Endothelial cell of umbilical vein (primary cell): ENCODE measurements at regions of chr15 and their contacts with region 1.

Region 1: GRCh38 chr15:92797168-92797951 is 102.8 kb upstream of the CHD2 start:
- DNase-seq: peak; percentile 77
- H3K4me3 ChIP-seq: no peak overlapping the region
- H3K27ac ChIP-seq: no peak overlapping the region
- H3K4me1 ChIP-seq: no peaks in the 10 kb centered on the region
- H3K27me3 ChIP-seq: no peaks in the 10 kb centered on the region
- CTCF ChIP-seq: peak; percentile 49 to 55
- POLR2A ChIP-seq: no peak

Region 2: DNA sequence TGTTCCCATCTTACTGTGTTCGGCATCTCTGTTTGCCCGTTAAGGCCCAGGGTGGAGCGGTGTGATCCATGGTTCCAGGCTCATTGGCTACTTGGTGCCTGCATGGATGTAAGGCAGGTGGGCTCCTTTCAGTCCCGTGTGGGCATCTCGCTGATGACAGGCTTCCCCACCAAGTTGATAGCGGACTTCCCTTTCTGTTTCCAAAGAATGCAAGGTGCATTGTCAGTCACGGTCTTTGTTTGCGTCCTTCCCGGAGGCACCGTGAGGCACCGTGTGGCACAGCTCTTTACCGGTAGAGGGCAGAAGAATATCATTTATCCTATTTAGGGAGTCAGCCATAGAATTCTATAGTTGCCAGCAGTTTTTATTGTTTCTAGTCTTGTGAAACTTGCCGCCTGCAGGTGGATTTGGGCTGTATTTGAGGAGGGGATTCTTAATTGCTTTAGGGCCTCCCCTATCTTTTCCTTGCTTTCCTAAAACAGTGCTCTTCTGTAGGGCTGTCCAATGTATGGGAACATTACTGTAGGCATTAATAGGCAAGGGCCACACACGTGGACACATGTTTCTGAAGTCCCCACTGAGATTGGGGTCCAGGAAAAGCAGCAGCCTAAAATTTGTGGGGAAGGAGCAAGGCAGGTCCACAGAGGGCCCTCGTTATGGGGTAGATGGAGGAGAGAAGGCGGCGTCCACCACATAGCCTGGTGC is 699.7 kb before region 1 on chr15:
- CTCF ChIA-PET with region 1: interaction called, 9 read pairs
- POLR2A ChIA-PET with region 1: no interaction called
- dilution Hi-C with region 1: no loop called
- intact Hi-C with region 1: loop called (anchors 1 kb)
- DNase-seq: peak; percentile 57
- H3K4me3 ChIP-seq: no peak overlapping the region
- H3K27ac ChIP-seq: no peak overlapping the region
- H3K4me1 ChIP-seq: no peaks in the 10 kb centered on the region
- H3K27me3 ChIP-seq: no peaks in the 10 kb centered on the region
- CTCF ChIP-seq: peak; percentile 68
- POLR2A ChIP-seq: no peak

Region 3: DNA sequence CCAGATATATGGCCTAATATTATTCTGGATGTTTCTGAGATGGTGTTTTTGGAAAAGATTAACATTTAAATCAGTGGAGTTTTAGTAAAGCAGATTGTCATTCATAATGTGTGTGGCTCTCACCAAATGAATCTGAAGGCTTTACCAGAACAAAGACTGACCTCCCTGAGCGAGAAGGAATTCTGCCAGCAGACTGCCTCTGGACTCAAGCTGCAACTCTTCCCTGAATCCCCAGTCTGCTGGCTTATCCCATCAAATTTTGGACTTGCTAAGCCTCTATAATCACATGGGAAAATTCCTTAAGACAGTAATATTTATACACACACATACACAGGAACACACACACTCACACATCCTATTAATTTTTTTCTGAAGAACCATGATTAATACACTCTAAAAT is 244.0 kb before region 1 on chr15:
- CTCF ChIA-PET with region 1: no interaction called
- POLR2A ChIA-PET with region 1: no interaction called
- dilution Hi-C with region 1: no loop called
- intact Hi-C with region 1: no loop called
- DNase-seq: no peak
- H3K4me3 ChIP-seq: no peak overlapping the region
- H3K27ac ChIP-seq: no peak overlapping the region
- H3K4me1 ChIP-seq: no peaks in the 10 kb centered on the region
- H3K27me3 ChIP-seq: peaks cover 3 to 7% of the 10 kb centered on the region in 2 experiments
- CTCF ChIP-seq: no peak
- POLR2A ChIP-seq: no peak

Region 4: GRCh38 chr15:92751524-92751923 is 45.8 kb before region 1 on chr15:
- CTCF ChIA-PET with region 1: no interaction called
- POLR2A ChIA-PET with region 1: no interaction called
- dilution Hi-C with region 1: no loop called
- intact Hi-C with region 1: no loop called
- DNase-seq: no peak
- H3K4me3 ChIP-seq: no peak overlapping the region
- H3K27ac ChIP-seq: no peak overlapping the region
- H3K4me1 ChIP-seq: no peaks in the 10 kb centered on the region
- H3K27me3 ChIP-seq: no peaks in the 10 kb centered on the region
- CTCF ChIP-seq: no peak
- POLR2A ChIP-seq: no peak

Region 5: DNA sequence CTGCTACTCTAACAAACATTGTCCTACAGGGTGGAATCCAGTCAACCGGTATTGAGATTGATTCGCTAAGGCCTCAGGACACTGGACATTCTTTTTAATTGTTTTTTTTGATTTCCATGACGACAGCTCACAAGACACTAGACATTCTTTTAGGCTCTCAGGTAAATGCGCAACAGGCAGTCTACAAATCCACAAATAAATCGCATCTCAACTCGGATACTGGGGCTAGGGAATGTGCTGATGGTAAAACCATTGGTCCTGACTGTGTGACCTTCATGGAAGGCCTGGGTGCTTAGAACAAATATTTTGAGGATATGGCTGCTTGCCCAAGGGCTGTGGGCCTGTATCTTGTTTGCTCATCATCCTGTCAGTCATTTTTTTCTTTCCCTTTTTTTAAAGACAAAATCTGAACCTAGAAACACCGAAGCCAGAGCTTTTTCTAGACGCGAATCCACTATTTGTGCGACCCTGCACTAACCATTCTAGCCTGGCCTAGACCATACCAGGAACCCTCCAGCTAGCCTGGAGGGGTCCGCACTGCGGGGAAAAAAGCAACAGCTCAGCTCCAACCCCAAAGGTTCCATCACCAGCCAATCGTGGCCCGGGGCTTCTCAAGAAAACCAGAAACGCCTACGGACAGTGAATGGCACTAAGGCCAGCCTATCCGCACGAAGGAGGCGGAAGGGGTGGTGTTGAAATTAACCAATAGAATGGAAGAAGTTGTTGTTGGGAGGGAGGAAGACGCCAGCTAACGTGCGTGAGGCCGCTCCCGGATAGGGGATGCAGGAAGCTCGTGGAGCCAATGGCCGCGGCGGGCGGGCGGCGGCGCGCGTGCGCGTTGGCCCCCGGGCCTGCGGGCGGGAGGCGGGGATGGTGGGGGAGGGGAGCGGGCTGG is 84.7 kb after region 1 on chr15:
- CTCF ChIA-PET with region 1: interaction called, 12 read pairs
- POLR2A ChIA-PET with region 1: interaction called, 8 read pairs
- dilution Hi-C with region 1: no loop called
- intact Hi-C with region 1: no loop called
- DNase-seq: peak; percentile 100
- H3K4me3 ChIP-seq: peak overlapping the region in 2 of 3 experiments; percentile 49 to 67
- H3K27ac ChIP-seq: peak overlapping the region; percentile 52
- H3K4me1 ChIP-seq: peaks cover 23% of the 10 kb centered on the region
- H3K27me3 ChIP-seq: peaks cover 17 to 20% of the 10 kb centered on the region in 2 experiments
- CTCF ChIP-seq: no peak
- POLR2A ChIP-seq: peak; percentile 52

Region 6: GRCh38 chr15:92917606-92918407 is 120.4 kb after region 1 on chr15:
- CTCF ChIA-PET with region 1: interaction called, 75 read pairs
- POLR2A ChIA-PET with region 1: interaction called, 3 read pairs
- dilution Hi-C with region 1: loop called (anchors 25 kb)
- intact Hi-C with region 1: loop called (anchors 1 kb)
- DNase-seq: peak; percentile 98
- H3K4me3 ChIP-seq: peak overlapping the region in 1 of 3 experiments; percentile 42
- H3K27ac ChIP-seq: peak overlapping the region; percentile 87
- H3K4me1 ChIP-seq: peaks cover 56% of the 10 kb centered on the region
- H3K27me3 ChIP-seq: no peaks in the 10 kb centered on the region
- CTCF ChIP-seq: peak; percentile 69 to 82
- POLR2A ChIP-seq: peak; percentile 54

Region 7: DNA sequence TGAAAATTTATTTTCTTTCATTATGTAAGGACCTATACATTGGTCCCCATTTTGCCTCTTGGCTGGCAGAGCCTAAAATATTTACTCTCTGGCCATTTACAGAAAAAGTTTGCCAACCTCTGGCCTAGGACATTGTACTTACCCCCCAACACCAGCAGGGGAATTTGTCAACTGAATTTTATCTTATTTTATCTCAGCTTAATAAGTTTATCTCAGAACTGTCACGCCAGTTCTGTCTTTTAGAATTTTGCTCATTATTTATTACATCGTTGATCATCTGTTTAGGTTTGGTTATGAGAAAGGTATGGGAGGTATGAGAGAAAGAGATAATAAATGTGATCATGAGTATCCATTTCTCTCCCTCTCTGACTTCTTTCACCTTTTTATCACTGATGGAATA is 141.0 kb after region 1 on chr15:
- CTCF ChIA-PET with region 1: interaction called, 15 read pairs
- POLR2A ChIA-PET with region 1: interaction called, 3 read pairs
- dilution Hi-C with region 1: no loop called
- intact Hi-C with region 1: no loop called
- DNase-seq: no peak
- H3K4me3 ChIP-seq: no peak overlapping the region
- H3K27ac ChIP-seq: no peak overlapping the region
- H3K4me1 ChIP-seq: no peaks in the 10 kb centered on the region
- H3K27me3 ChIP-seq: no peaks in the 10 kb centered on the region
- CTCF ChIP-seq: no peak
- POLR2A ChIP-seq: no peak

Region 8: DNA sequence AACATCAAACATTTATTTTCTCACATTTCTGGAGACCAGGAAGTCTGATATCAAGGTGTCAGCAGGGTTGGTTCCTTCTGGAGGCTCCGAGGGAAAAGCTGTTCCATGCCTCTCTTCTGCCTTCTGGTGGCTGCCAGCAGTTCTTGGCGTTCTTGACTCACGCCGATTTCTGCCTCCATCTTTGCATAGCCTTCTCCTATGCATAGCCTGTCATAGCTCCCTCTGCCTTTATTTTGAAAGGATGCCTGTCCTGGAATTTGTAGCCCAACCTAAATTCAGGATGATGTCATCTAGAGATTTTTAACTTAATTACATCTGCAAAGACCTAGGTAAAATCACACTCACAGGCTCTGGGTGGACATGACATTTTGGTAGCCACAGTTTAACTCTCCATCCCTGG is 221.2 kb after region 1 on chr15:
- CTCF ChIA-PET with region 1: interaction called, 7 read pairs
- POLR2A ChIA-PET with region 1: interaction called, 8 read pairs
- dilution Hi-C with region 1: no loop called
- intact Hi-C with region 1: loop called (anchors 5 kb)
- DNase-seq: no peak
- H3K4me3 ChIP-seq: no peak overlapping the region
- H3K27ac ChIP-seq: no peak overlapping the region
- H3K4me1 ChIP-seq: no peaks in the 10 kb centered on the region
- H3K27me3 ChIP-seq: no peaks in the 10 kb centered on the region
- CTCF ChIP-seq: peak in 1 of 2 donors; percentile 16
- POLR2A ChIP-seq: no peak

Region 9: DNA sequence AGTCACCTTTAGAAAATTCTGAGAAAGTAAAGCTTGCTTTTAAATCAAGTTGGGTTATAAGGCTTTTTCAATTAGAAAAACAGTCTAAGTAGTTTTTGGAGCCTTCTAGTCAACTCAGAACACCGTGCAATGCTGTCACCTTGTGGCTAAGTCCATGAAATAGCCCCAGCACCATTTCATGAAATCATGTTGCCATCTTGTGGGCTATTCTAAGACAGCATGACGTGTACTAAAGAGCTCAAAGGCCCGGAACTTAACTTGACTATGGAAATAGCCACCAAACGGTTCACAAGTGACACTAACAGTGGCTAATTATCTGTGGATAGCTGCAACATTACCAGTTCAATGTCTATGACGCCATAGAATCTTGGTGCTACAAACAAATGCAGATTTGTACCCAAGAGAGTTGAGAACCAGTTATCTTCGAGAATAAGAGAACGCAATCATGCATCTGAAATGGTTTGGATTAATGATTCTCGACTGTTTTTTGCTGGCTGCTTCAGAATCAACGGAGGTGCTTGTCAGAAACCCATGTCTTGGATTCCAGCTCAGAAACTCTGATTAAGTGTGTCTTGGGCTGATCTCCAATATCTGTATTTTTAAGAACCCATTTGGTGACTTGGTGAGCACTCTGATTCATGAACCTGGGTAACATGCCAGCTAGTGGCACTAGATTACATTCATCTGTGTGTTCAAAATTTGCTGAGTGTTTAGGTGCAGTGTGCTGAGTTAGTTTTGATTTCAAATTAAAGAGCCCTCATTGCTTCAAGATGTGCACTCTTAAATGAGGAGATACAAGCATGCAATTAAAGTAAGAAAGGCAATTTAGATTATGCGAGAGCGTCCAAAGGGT is 1322.8 kb after region 1 on chr15:
- CTCF ChIA-PET with region 1: interaction called, 10 read pairs
- POLR2A ChIA-PET with region 1: no interaction called
- dilution Hi-C with region 1: no loop called
- intact Hi-C with region 1: no loop called
- DNase-seq: peak; percentile 65
- H3K4me3 ChIP-seq: no peak overlapping the region
- H3K27ac ChIP-seq: no peak overlapping the region
- H3K4me1 ChIP-seq: no peaks in the 10 kb centered on the region
- H3K27me3 ChIP-seq: no peaks in the 10 kb centered on the region
- CTCF ChIP-seq: peak; percentile 62 to 63
- POLR2A ChIP-seq: no peak